ENCODE measurements at regions of chr3 and their contacts with region 1.

Region 1: GRCh38 chr3:15815696-15816095 is 17.9 kb upstream of the ANKRD28 start:
- DNase-seq: peak; percentile 37
- H3K4me3 ChIP-seq: no peak overlapping the region
- CTCF ChIP-seq: no peak

Region 2: GRCh38 chr3:15205934-15206661 is 609.6 kb before region 1 on chr3 and contains the start of gene CAPN7:
- CTCF ChIA-PET with region 1: interaction called, 16 read pairs
- POLR2A ChIA-PET with region 1: no interaction called
- DNase-seq: peak; percentile 46
- H3K4me3 ChIP-seq: peak within 1 kb of the TSS; percentile 86
- CTCF ChIP-seq: peak; percentile 55

Region 3: GRCh38 chr3:15629860-15630597 is 185.7 kb before region 1 on chr3:
- CTCF ChIA-PET with region 1: interaction called, 90 read pairs
- POLR2A ChIA-PET with region 1: no interaction called
- DNase-seq: no peak
- H3K4me3 ChIP-seq: peak overlapping the region; percentile 46
- CTCF ChIP-seq: peak; percentile 65

Region 4: DNA sequence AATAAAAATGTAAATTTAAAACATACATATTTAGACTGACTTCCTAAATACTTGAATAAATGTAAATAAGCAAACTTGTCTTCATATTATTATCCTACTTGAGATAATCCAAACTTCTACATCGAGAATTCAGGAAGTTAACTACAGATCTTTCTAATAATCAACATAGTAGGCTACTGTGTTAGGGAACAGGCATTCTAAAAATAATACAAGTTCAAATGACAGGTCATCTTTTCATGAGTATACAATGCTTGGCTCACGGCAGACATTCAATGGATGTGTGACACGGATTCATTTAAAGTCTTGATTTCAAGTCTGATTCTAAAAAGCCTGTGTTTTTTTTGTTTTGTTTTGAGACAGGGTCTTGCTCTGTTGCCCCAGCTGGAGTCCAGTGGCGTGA is 125.5 kb before region 1 on chr3:
- CTCF ChIA-PET with region 1: no interaction called
- POLR2A ChIA-PET with region 1: no interaction called
- DNase-seq: no peak
- H3K4me3 ChIP-seq: no peak overlapping the region
- CTCF ChIP-seq: no peak

Region 5: DNA sequence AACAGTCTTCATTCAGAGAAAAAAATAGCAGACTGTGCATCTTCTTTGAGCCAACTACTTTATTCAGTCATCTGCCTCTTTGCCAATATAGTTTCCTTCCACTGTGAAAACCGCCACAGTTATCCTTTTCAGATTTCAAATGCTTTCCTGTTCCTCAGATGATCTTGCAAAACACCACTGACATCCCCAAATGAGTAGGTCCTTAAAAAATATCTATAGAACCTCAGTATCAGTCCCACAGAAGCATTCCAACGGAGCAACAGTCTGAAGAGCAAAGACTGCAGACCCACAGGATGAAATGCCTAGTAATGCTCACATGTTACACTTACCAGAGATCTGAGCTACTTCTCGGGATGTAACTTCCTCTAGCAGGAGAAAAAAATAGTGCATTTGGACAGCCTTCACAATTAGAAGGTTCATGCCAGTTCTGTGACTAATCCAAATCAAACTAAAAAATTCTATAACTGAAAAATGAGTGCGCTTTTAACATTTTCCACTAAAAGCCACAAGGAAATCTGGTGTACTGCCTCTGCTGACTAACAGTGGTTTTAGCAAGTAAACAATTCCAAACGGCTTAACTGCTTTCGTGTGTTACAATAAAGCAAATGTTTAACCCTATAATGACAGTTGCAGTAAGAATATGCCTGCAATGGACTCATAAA is 17.9 kb before region 1 on chr3 and contains the start of gene ANKRD28:
- CTCF ChIA-PET with region 1: interaction called, 47 read pairs
- POLR2A ChIA-PET with region 1: no interaction called
- DNase-seq: peak; percentile 92
- H3K4me3 ChIP-seq: peak within 1 kb of the TSS; percentile 74
- CTCF ChIP-seq: peak; percentile 7

Region 6: DNA sequence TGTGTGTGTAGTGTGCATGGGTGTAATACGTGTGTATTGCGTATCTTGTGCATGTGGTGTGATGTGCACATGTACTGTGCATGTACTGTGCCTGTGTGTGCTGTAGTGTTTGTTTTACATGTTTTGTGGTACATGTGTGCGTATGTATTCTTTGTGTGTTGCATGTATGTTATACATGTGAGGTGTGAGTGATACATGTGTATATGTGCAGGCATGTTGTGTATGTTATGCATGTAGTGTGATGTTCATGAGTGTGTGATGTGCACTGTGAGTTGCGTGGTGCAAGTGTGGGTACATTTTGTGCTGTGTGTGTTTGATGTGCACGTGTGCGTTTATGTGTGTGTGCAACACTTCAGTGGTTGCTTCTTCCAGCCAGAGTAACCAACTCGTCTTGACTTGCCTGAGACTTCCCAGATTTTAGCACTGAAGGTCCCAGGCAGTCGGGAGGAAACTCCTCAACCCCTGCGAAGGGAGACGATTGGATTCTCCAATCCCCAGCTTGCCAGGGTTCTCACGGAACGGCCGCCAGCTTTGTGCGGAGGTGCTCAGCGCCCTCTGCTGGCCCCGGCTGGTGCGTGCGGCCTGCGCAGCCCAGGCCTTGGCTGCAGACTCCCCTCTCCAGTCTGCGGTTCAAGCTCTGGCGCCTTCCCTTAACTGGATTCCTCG is 362.4 kb after region 1 on chr3:
- CTCF ChIA-PET with region 1: interaction called, 10 read pairs
- POLR2A ChIA-PET with region 1: no interaction called
- DNase-seq: no peak
- H3K4me3 ChIP-seq: peak overlapping the region; percentile 65
- CTCF ChIP-seq: peak; percentile 100

Region 7: DNA sequence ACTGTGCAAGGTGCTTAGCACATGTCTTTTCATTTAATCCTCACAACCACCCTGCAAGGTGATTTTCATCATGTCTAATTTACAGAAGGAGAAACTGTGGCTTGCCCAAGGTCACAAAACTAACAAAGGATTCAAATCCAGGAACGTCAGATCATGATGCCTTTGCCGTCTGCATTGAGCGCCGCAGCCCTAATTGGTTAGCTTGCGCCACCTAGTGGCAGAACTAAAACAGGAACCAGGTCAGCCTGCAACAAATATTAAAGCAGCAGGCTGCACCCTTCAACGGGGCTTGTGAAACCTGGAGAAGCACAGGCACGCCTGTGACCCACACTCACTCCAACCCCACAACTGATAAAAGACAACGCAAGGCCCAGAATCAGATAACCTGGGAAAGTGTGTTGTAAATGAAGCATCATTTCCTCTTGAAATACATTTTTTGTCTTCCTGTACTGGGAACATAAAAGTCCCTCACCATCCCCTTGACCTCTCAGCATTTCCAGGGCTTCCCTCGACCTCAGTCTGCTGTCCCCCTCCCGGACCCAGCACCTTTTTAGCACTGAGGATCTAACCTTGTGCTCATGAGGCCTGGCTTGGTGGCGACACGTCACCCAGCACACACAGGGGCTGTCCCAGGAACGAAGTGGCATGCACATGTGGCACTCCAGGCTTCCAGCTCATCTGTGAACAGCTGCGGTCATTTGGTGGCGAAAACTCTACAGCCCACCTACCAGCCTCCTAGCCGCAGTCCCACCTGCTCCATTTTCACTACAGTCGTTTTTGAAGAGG is 431.8 kb after region 1 on chr3:
- CTCF ChIA-PET with region 1: interaction called, 32 read pairs
- POLR2A ChIA-PET with region 1: no interaction called
- DNase-seq: peak; percentile 31
- H3K4me3 ChIP-seq: no peak overlapping the region
- CTCF ChIP-seq: peak; percentile 82

Region 8: GRCh38 chr3:16264708-16265454 is 449.2 kb after region 1 on chr3 and contains the starts of genes DPH3 and OXNAD1:
- CTCF ChIA-PET with region 1: interaction called, 12 read pairs
- POLR2A ChIA-PET with region 1: no interaction called
- DNase-seq: peak; percentile 97
- H3K4me3 ChIP-seq: peak within 1 kb of the TSS; percentile 98
- CTCF ChIP-seq: no peak

Measured in AG04449 (cell line).